Ovary (tissue), 10 donors: ENCODE measurements at regions of chr6 and their contacts with region 1.

Region 1: DNA sequence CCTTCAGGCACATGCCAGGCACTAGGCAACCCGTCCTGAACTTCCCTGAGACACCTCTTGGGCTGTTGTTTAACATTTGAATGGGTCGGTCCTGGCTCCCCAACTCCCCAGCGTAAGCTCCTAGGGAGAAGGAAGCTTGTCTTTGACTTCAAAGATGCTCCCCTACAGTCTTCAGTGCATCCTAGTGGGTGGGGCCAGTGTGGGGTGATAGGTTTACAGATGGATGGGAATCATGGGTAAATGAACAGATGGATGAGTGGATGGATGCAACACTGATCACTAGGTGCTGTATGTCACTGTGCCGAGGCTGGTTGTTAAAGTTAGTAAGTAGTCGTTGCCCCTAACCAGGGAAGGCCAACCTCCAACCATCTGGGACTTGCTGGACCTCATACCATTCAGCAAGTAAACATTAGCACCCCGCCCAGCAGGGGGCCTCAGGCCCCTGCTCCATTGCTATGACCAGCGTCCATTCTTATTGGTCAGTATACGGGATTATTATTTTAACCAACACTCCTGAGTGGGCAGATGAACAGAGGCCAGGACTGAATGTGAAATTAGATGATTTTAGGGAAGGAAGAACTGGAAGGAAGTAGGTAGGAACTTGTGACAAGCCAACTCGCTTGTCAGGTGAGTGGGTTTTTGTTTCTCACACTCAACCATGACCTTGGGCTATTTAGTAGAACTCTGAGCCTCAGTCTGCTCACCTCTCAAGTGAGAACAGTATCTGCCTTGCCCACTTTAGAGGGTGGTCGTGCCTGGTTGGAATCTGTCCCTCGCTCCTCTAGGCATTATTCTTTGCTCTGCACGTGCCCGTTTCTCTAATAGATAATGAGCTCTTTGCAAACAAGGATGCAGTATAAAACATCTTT is 82.9 kb upstream of the FOXP4 start:
- DNase-seq: peak; percentile 45 to 80 (median 73)
- H3K4me3 ChIP-seq: no peak overlapping the region
- H3K27ac ChIP-seq: no peak overlapping the region
- H3K4me1 ChIP-seq: no peaks in the 10 kb centered on the region
- H3K27me3 ChIP-seq: no peaks in the 10 kb centered on the region
- CTCF ChIP-seq: peak; percentile 19 to 53 (median 45)
- EP300 ChIP-seq: no peak
- POLR2A ChIP-seq: no peak

Region 2: GRCh38 chr6:41584668-41585205 is 121.4 kb after region 1 on chr6:
- intact Hi-C with region 1: loop called in 1 of 4 experiments (anchors 5 kb)
- DNase-seq: no peak
- H3K4me3 ChIP-seq: no peak overlapping the region
- H3K27ac ChIP-seq: no peak overlapping the region
- H3K4me1 ChIP-seq: no peaks in the 10 kb centered on the region
- H3K27me3 ChIP-seq: no peaks in the 10 kb centered on the region
- CTCF ChIP-seq: no peak
- EP300 ChIP-seq: no peak
- POLR2A ChIP-seq: no peak

Region 3: GRCh38 chr6:41689171-41690008 is 226.1 kb after region 1 on chr6:
- intact Hi-C with region 1: no loop called
- DNase-seq: peak in 2 of 5 donors; percentile 7 to 14
- H3K4me3 ChIP-seq: no peak overlapping the region
- H3K27ac ChIP-seq: no peak overlapping the region
- H3K4me1 ChIP-seq: no peaks in the 10 kb centered on the region
- H3K27me3 ChIP-seq: no peaks in the 10 kb centered on the region
- CTCF ChIP-seq: no peak
- EP300 ChIP-seq: no peak
- POLR2A ChIP-seq: no peak